Head of caudate nucleus (tissue), 42 donors: ENCODE measurements at regions of chr18 and their contacts with region 1.

Region 1: GRCh38 chr18:5546660-5547059 is 2.9 kb upstream of the EPB41L3 start:
- DNase-seq: peak in 28 of 42 donors; percentile 26 to 74 (median 52)

Region 2: GRCh38 chr18:5350636-5351035 is 196.0 kb before region 1 on chr18:
- intact Hi-C with region 1: no loop called
- DNase-seq: no peak

Region 3: DNA sequence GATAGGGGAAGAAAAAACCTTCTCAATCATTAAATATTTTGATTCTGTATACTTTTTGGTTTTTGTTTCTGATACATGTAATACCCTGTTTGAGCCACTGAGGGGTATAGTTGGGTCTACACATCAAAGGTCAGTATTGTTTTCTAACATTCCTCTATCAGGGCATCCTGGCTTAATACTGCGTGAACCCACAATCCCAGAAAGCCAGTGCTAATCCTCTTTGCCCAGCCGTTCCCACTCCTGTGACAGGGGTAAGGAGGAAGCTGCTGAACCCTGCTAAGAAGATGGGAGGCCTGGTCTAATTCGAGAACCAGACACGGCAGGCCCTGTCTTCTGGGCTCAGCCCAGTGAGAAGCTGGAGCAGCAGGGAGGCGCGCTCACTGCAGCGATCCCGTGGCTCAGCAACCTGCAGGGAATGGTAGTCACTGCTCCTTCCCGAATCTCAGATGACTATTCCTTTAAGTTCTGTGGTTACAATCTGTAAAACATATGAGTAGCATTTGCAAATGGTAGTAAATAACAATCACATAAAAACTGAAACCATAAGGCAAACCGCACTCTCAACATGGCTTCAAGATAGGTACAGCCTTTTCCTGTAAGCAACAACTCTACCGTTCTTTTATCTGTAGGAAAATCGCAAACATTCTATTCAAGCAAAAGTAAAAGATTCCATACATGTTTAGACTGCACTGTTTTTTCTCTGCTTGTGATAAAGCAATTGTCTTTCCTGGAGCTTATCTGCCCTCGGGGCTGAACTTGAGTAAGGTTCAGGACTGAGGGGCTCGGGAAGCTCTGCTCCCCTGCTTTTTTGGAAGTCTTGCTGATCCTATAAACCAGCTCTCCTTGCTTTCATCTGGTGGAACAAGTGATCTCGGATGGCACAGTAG is 89.8 kb before region 1 on chr18:
- intact Hi-C with region 1: loop called (anchors 10 kb)
- DNase-seq: peak in 35 of 42 donors; percentile 13 to 73 (median 38)